ENCODE measurements at regions of chr11 and their contacts with region 1.

Region 1: GRCh38 chr11:18321980-18322711 is at the starts of genes GTF2H1 and HPS5:
- DNase-seq: peak; percentile 98
- H3K4me3 ChIP-seq: peak within 1 kb of the TSS; percentile 78 to 98 (median 94)
- H3K27ac ChIP-seq: peak within 1 kb of the TSS; percentile 93
- H3K4me1 ChIP-seq: peaks cover 31% of the 10 kb centered on the region
- H3K27me3 ChIP-seq: no peaks in the 10 kb centered on the region
- CTCF ChIP-seq: no peak
- total RNA-seq, gene GTF2H1: 67.5 to 98.9 TPM
- total RNA-seq, gene HPS5: 34.2 to 108 TPM

Region 2: DNA sequence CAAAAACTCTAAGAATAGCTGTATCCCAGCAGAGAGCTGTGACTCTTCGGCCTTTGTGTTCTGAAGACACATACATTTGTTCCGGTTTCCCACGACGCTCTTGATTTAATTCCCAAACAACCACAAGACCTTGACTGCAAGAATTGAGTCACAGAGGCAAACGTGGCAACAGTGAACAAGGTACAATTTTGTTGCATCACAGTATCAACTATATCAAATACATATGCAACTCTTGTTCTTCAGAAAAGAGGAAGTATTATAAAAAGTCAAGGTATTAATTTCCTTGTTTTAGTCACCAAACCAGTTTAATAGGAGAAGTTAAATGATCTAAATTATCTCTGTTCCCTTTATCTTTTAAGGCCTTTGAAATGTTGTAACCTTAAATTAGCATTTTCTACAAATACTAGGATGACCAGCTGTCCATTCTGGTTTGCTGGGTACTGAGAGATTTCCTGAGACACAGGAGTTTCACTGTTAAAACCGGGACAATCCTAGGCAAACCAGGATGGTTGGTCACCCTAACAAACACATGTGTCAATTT is 11.3 kb before region 1 on chr11:
- CTCF ChIA-PET with region 1: no interaction called
- dilution Hi-C with region 1: no loop called
- in situ Hi-C with region 1: no loop called
- intact Hi-C with region 1: loop called (anchors 1 kb)
- DNase-seq: peak; percentile 95
- H3K4me3 ChIP-seq: no peak overlapping the region
- H3K27ac ChIP-seq: peak overlapping the region; percentile 94
- H3K4me1 ChIP-seq: peaks cover 50% of the 10 kb centered on the region
- H3K27me3 ChIP-seq: no peaks in the 10 kb centered on the region
- CTCF ChIP-seq: no peak

Region 3: GRCh38 chr11:18383388-18384156 is 61.4 kb after region 1 on chr11:
- CTCF ChIA-PET with region 1: no interaction called
- dilution Hi-C with region 1: no loop called
- in situ Hi-C with region 1: no loop called
- intact Hi-C with region 1: loop called (anchors 2 kb)
- DNase-seq: peak; percentile 100
- H3K4me3 ChIP-seq: peak overlapping the region in 2 of 3 experiments; percentile 7 to 11
- H3K27ac ChIP-seq: peak overlapping the region; percentile 96
- H3K4me1 ChIP-seq: peaks cover 24% of the 10 kb centered on the region
- H3K27me3 ChIP-seq: no peaks in the 10 kb centered on the region
- CTCF ChIP-seq: no peak

Region 4: DNA sequence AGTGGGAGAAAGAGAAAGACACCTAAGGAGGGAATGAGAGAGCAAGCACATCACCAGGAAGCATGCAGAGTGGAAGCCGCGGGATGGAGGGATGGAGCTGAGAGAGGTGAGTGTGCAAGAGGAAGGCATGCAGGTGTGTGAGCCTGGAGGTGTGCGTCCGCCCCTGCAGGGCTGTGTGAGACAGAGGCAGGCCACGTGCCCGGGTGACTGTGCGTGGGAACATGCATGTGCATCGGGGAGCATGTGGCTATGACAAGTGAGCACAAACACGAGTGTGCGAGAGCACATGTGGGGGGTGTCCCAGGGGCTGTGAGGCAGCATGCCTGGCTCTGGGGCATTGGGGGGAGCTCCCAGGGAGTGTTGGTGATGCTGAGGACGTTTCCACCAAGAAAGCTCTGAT is 439.6 kb after region 1 on chr11:
- CTCF ChIA-PET with region 1: no interaction called
- dilution Hi-C with region 1: no loop called
- in situ Hi-C with region 1: no loop called
- intact Hi-C with region 1: loop called (anchors 5 kb)
- DNase-seq: no peak
- H3K4me3 ChIP-seq: no peak overlapping the region
- H3K27ac ChIP-seq: no peak overlapping the region
- H3K4me1 ChIP-seq: peaks cover 13% of the 10 kb centered on the region
- H3K27me3 ChIP-seq: no peaks in the 10 kb centered on the region
- CTCF ChIP-seq: no peak

Measured in mammary epithelial cell (primary cell).